Activated naive CD4-positive, alpha-beta T cell treated with anti-CD3 and anti-CD28 coated beads for 36 hours (primary cell): ENCODE measurements at regions of chr9 and their contacts with region 1.

Region 1: GRCh38 chr9:97632985-97633858 is at the starts of genes NCBP1 and TSTD2:
- DNase-seq: peak; percentile 98
- H3K4me3 Mint-ChIP-seq: peak within 1 kb of the TSS; percentile 88
- H3K27ac Mint-ChIP-seq: peak within 1 kb of the TSS; percentile 97
- H3K4me1 Mint-ChIP-seq: peaks cover 53% of the 10 kb centered on the region
- H3K27me3 Mint-ChIP-seq: no peaks in the 10 kb centered on the region
- total RNA-seq, gene NCBP1: 32.4 to 33.9 TPM
- total RNA-seq, gene TSTD2: 11.1 to 12.4 TPM

Region 2: GRCh38 chr9:96777426-96777864 is 855.8 kb before region 1 on chr9:
- CTCF ChIA-PET with region 1: no interaction called
- intact Hi-C with region 1: loop called (anchors 1 kb)
- DNase-seq: no peak
- H3K4me3 Mint-ChIP-seq: peak overlapping the region; percentile 100
- H3K27ac Mint-ChIP-seq: peak overlapping the region; percentile 96
- H3K4me1 Mint-ChIP-seq: peaks cover 32% of the 10 kb centered on the region
- H3K27me3 Mint-ChIP-seq: no peaks in the 10 kb centered on the region

Region 3: GRCh38 chr9:97237951-97238851 is 395.0 kb before region 1 on chr9:
- CTCF ChIA-PET with region 1: interaction called, 3 read pairs
- intact Hi-C with region 1: loop called (anchors 1 kb)
- DNase-seq: peak; percentile 88
- H3K4me3 Mint-ChIP-seq: peak overlapping the region; percentile 88
- H3K27ac Mint-ChIP-seq: peak overlapping the region; percentile 81
- H3K4me1 Mint-ChIP-seq: peaks cover 14% of the 10 kb centered on the region
- H3K27me3 Mint-ChIP-seq: no peaks in the 10 kb centered on the region

Region 4: GRCh38 chr9:97651646-97652045 is 18.4 kb after region 1 on chr9:
- CTCF ChIA-PET with region 1: no interaction called
- intact Hi-C with region 1: loop called (anchors 2 kb)
- DNase-seq: no peak
- H3K4me3 Mint-ChIP-seq: no peak overlapping the region
- H3K27ac Mint-ChIP-seq: no peak overlapping the region
- H3K4me1 Mint-ChIP-seq: no peaks in the 10 kb centered on the region
- H3K27me3 Mint-ChIP-seq: no peaks in the 10 kb centered on the region

Region 5: GRCh38 chr9:97803167-97804058 is 170.2 kb after region 1 on chr9:
- CTCF ChIA-PET with region 1: no interaction called
- intact Hi-C with region 1: loop called (anchors 1 kb)
- DNase-seq: peak; percentile 72
- H3K4me3 Mint-ChIP-seq: peak overlapping the region; percentile 77
- H3K27ac Mint-ChIP-seq: no peak overlapping the region
- H3K4me1 Mint-ChIP-seq: peaks cover 8% of the 10 kb centered on the region
- H3K27me3 Mint-ChIP-seq: peaks cover 15% of the 10 kb centered on the region

Region 6: DNA sequence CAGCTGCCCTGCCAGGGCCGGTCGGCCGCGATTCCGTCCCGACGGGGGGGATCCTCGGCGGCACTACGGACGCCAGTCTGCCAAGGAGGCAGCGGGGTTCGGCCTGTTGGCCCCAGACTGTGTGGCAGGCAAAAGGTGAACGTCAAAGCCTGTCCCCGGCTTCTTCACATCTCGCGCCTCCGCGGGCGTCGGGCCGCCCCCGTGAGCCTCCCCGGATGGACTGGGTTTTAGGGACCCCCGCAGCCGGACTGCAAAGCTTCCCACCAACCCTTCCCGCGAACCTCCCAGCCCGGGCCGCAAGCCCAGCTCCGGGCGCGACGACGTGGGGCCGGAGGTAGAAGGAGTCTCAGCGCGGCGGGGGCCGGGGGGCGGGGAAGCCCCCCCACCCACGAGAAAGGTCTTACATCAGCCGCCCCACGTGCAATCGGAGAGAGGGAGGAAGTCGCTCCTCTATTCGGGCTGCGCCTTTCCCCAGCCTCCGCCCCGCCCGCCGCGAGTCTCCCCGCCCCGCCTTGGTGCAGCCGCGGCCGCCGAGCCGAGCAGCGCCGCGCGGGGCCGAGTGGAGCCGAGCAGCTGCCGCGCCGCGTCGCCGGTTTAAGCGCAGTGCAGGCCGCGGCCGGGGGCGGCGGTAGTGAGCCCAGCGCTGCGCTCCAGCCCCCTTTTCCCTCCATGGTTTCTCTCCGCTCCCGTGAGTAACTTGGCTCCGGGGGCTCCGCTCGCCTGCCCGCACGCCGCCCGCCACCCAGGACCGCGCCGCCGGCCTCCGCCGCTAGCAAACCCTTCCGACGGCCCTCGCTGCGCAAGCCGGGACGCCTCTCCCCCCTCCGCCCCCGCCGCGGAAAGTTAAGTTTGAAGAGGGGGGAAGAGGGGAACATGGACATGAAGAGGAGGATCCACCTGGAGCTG is 349.7 kb after region 1 on chr9 and contains the start of gene ANP32B:
- CTCF ChIA-PET with region 1: interaction called, 3 read pairs
- intact Hi-C with region 1: loop called (anchors 1 kb)
- DNase-seq: peak; percentile 96
- H3K4me3 Mint-ChIP-seq: peak within 1 kb of the TSS; percentile 82
- H3K27ac Mint-ChIP-seq: peak within 1 kb of the TSS; percentile 94
- H3K4me1 Mint-ChIP-seq: peaks cover 45% of the 10 kb centered on the region
- H3K27me3 Mint-ChIP-seq: no peaks in the 10 kb centered on the region
- total RNA-seq, gene ANP32B: 412 to 414 TPM